Vagina (tissue), 2 donors: ENCODE measurements at regions of chr12 and their contacts with region 1.

Region 1: GRCh38 chr12:54032627-54033100 is at the start of gene HOXC5:
- DNase-seq: no peak
- H3K4me3 ChIP-seq: peak within 1 kb of the TSS; percentile 7 to 32
- H3K27ac ChIP-seq: no peak within 1 kb of the TSS
- H3K4me1 ChIP-seq: peaks cover 41% of the 10 kb centered on the region
- H3K27me3 ChIP-seq: no peaks in the 10 kb centered on the region
- CTCF ChIP-seq: peak; percentile 71 to 77 (median 76)
- POLR2A ChIP-seq: no peak
- total RNA-seq, gene HOXC5: not detected

Region 2: DNA sequence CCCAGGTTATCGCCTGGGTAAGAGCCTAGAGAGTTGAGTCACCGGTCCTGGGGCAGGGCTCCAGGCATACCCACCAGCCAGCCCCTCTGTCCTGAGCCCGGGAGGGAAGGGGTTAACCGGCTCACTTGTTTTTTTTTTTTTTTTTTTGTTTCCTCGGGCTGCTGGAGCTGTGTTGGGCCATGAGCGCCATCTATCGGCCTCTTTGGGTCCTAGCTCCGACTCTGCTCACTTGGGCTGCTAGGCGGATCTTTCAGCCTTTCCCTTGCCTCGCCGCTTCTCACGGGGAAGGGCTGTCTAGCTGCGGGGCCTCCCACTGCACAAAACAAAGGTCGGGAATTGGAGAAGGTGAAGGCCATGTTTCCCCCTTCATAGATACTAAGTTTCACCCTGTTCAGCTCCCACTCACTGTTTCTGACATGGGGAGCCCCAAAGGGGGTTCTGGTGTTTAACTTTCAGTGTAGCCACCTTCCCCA is 158.9 kb after region 1 on chr12:
- intact Hi-C with region 1: loop called (anchors 5 kb)
- DNase-seq: no peak
- H3K4me3 ChIP-seq: no peak overlapping the region
- H3K27ac ChIP-seq: no peak overlapping the region
- H3K4me1 ChIP-seq: peaks cover 12% of the 10 kb centered on the region
- H3K27me3 ChIP-seq: no peaks in the 10 kb centered on the region
- CTCF ChIP-seq: peak; percentile 63 to 67 (median 66)
- POLR2A ChIP-seq: no peak